ENCODE measurements at regions of chr2 and their contacts with region 1.

Region 1: GRCh38 chr2:203535078-203535783 is at the start of gene RAPH1:
- DNase-seq: peak; percentile 84
- H3K4me3 Mint-ChIP-seq: peak within 1 kb of the TSS; percentile 77
- H3K27ac Mint-ChIP-seq: peak within 1 kb of the TSS; percentile 93
- H3K4me1 Mint-ChIP-seq: peaks cover 17% of the 10 kb centered on the region
- H3K27me3 Mint-ChIP-seq: no peaks in the 10 kb centered on the region
- CTCF ChIP-seq: no peak
- total RNA-seq, gene RAPH1: 78.0 and 79.8 TPM in 2 replicates

Region 2: DNA sequence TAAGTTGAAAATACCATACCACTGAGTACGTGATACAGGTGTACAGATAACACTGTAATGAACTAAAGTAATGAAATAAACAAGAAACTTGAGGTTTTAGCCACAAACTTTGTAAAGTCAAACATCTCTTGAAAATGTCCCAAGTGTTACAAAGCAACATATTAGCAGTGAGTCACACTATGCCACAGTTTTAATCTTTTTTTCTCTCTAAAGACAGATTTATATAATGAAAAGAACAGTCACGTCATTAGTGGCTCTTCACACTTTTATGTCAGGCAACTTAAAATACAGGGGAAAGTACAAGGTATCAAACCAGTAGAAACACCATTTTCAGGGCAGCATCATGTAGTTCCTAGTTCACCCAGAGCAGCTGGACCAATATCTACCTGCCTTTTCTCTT is 42.3 kb before region 1 on chr2:
- CTCF ChIA-PET with region 1: interaction called, 3 read pairs
- POLR2A ChIA-PET with region 1: interaction called, 19 read pairs
- intact Hi-C with region 1: loop called (anchors 2 kb)
- DNase-seq: no peak
- H3K4me3 Mint-ChIP-seq: no peak overlapping the region
- H3K27ac Mint-ChIP-seq: peak overlapping the region; percentile 42
- H3K4me1 Mint-ChIP-seq: peaks cover 7% of the 10 kb centered on the region
- H3K27me3 Mint-ChIP-seq: no peaks in the 10 kb centered on the region
- CTCF ChIP-seq: no peak

Region 3: DNA sequence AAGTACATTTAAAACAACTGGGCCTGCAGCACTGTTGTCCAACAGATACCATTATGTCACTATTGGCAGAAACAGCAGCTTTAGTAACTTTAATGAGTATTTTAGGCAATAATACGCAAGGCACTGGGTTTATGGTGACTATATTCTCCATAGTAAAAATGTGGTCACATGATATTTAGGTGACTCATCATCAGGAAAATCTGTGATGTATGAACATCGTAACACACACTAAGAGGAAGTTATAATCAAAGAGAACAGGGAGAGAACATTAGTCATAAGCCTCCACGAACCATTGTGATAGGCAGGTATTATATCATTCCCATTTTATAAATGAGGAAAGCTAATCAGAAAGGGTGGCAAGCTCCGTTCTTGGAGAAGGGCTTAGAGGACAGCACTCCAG is 37.1 kb before region 1 on chr2:
- CTCF ChIA-PET with region 1: interaction called, 8 read pairs
- POLR2A ChIA-PET with region 1: interaction called, 19 read pairs
- intact Hi-C with region 1: loop called (anchors 2 kb)
- DNase-seq: peak; percentile 68
- H3K4me3 Mint-ChIP-seq: peak overlapping the region; percentile 54
- H3K27ac Mint-ChIP-seq: peak overlapping the region; percentile 61
- H3K4me1 Mint-ChIP-seq: peaks cover 15% of the 10 kb centered on the region
- H3K27me3 Mint-ChIP-seq: no peaks in the 10 kb centered on the region
- CTCF ChIP-seq: no peak

Region 4: DNA sequence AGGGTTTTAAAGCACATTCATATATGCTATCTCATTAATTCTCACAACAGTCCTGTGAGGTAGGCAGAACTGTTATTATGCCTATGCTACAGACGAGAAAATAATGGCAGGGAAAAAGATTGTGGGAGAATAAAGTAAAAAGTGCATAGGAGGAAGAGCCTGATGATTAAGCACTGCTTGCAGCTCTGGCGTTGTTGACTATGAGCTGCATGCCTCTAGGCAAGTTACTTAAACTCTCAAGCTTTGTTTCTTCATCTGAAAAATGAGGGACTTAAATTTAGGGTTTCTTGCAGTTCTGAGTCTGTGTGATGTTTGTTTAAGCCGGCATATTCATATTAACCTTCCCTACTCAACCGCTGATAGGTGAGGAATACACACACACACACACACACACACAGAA is 51.5 kb after region 1 on chr2:
- CTCF ChIA-PET with region 1: no interaction called
- POLR2A ChIA-PET with region 1: interaction called, 12 read pairs
- intact Hi-C with region 1: no loop called
- DNase-seq: peak; percentile 30
- H3K4me3 Mint-ChIP-seq: no peak overlapping the region
- H3K27ac Mint-ChIP-seq: no peak overlapping the region
- H3K4me1 Mint-ChIP-seq: peaks cover 28% of the 10 kb centered on the region
- H3K27me3 Mint-ChIP-seq: no peaks in the 10 kb centered on the region
- CTCF ChIP-seq: no peak

Measured in MCF 10A (cell line).